ENCODE measurements at regions of chr10 and their contacts with region 1.

Region 1: GRCh38 chr10:102461187-102462054 is 10.1 kb upstream of the C10orf95 start:
- DNase-seq: peak; percentile 84 to 91 (median 89)
- H3K4me3 ChIP-seq: peak overlapping the region; percentile 49 to 83 (median 68)
- H3K27ac ChIP-seq: peak overlapping the region in 1 of 2 experiments; percentile 58
- H3K4me1 ChIP-seq: peaks cover 0 to 23% (median 15%) of the 10 kb centered on the region in 4 experiments
- H3K27me3 ChIP-seq: peaks cover 0 to 18% (median 0%) of the 10 kb centered on the region in 5 experiments

Region 2: GRCh38 chr10:102399217-102400089 is 62.0 kb before region 1 on chr10:
- CTCF ChIA-PET with region 1: no interaction called
- POLR2A ChIA-PET with region 1: no interaction called
- DNase-seq: peak; percentile 88 to 92 (median 92)
- H3K4me3 ChIP-seq: peak overlapping the region; percentile 32 to 75 (median 44)
- H3K27ac ChIP-seq: no peak overlapping the region
- H3K4me1 ChIP-seq: peaks cover 0 to 33% (median 28%) of the 10 kb centered on the region in 4 experiments
- H3K27me3 ChIP-seq: no peaks in the 10 kb centered on the region

Region 3: GRCh38 chr10:102450194-102450938 is 11.1 kb before region 1 on chr10:
- CTCF ChIA-PET with region 1: interaction called, 20 read pairs
- POLR2A ChIA-PET with region 1: interaction called, 12 read pairs
- DNase-seq: peak; percentile 88 to 94 (median 92)
- H3K4me3 ChIP-seq: peak overlapping the region; percentile 75 to 98 (median 87)
- H3K27ac ChIP-seq: peak overlapping the region; percentile 61 to 83
- H3K4me1 ChIP-seq: peaks cover 6 to 33% (median 21%) of the 10 kb centered on the region in 4 experiments
- H3K27me3 ChIP-seq: no peaks in the 10 kb centered on the region

Region 4: DNA sequence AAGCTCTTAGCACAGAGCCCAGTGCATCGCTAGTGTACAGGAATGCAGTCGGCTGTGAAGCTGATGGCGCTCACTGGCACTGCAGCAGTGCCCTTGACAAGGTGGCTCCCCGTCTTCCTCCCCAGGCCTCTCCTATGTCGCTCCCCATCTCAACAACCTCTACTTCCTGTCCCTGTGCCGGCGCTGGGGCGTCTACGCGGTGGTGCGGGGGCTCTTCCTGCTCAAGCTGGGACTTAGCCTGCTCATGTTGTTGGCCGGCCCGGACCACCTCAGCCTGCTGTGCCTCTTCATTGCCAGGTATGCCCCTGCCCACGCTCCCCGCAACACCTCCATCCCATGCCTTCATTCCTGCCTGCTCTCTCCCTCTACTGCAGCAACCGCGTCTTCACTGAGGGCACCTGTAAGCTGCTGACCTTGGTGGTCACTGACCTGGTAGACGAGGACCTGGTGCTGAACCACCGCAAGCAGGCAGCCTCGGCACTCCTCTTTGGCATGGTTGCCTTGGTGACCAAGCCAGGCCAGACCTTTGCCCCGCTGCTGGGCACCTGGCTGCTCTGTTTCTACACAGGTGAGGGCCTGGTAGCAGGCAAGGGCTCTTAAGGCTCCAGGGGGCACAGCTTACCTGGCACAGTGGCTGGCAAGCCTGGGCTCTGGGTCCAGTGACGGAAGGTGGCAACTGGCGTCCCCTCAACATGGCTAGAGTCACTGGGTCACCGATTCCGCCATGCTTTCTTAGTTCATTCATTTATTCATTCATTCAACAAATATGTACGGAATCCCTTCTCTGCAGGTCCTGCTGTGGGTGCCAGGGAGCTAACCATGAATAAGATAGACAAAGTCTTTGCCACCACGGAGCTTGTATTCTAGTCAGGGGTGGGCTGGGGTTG is 12.3 kb after region 1 on chr10:
- CTCF ChIA-PET with region 1: interaction called, 23 read pairs
- POLR2A ChIA-PET with region 1: no interaction called
- DNase-seq: no peak
- H3K4me3 ChIP-seq: no peak overlapping the region
- H3K27ac ChIP-seq: no peak overlapping the region
- H3K4me1 ChIP-seq: peaks cover 0 to 4% (median 0%) of the 10 kb centered on the region in 4 experiments
- H3K27me3 ChIP-seq: no peaks in the 10 kb centered on the region

Measured in common myeloid progenitor, CD34-positive (primary cell).